Motor neuron (in vitro differentiated cells): ENCODE measurements at regions of chr20 and their contacts with region 1.

Region 1: GRCh38 chr20:35699127-35699975 is at the starts of genes NFS1 and ROMO1:
- ATAC-seq: peak; percentile 83 to 98 (median 96)
- H3K4me3 ChIP-seq: peak within 1 kb of the TSS; percentile 52 to 91 (median 59)
- H3K27ac ChIP-seq: peak within 1 kb of the TSS; percentile 81 to 96
- H3K4me1 ChIP-seq: peaks cover 11 to 12% of the 10 kb centered on the region in 2 donors
- total RNA-seq, gene NFS1: 11.1 to 37.2 (median 17.7) TPM
- total RNA-seq, gene ROMO1: 178 to 374 (median 295) TPM

Region 2: DNA sequence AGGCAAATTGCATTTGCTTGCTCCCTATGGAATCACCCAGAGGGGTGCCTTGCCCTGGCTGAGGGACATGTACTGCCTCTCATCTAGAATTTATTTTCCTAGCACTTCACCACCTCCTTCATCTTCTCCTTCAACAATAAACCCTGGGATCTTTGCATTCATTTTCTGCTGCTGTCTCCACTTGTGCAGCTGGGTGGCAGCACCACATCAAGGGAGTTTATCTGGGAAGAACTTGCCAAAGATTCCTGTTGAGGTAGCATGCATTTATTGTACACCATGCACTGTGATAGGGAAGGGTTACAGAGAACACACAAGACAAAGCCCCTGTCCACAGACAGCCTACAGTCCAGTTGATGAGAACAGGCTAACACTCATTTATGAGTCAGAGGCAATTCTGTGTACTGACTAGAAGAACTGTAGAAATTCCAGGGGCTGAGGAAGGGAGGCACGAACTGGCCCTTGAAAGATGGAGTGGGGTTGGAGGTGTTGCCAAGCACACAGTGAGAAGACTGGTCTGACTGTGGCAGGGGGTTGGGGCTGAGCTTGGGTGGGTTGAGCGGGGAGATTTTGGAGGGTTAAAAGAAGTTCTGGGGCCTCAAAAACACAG is 187.4 kb before region 1 on chr20:
- in situ Hi-C with region 1: loop called in 1 of 9 experiments (anchors 25 kb)
- ATAC-seq: peak; percentile 16 to 63 (median 38)
- H3K4me3 ChIP-seq: no peak overlapping the region
- H3K27ac ChIP-seq: no peak overlapping the region
- H3K4me1 ChIP-seq: no peaks in the 10 kb centered on the region

Region 3: GRCh38 chr20:35968931-35969330 is 269.6 kb after region 1 on chr20:
- in situ Hi-C with region 1: no loop called
- ATAC-seq: no peak
- H3K4me3 ChIP-seq: no peak overlapping the region
- H3K27ac ChIP-seq: no peak overlapping the region
- H3K4me1 ChIP-seq: peaks cover 0 to 3% of the 10 kb centered on the region in 2 donors